Natural killer cell (primary cell): ENCODE measurements at regions of chr4 and their contacts with region 1.

Region 1: GRCh38 chr4:173334085-173334772 is at the start of gene HMGB2:
- DNase-seq: peak; percentile 99 to 100
- ATAC-seq: peak; percentile 90 to 98 (median 90)
- H3K4me3 ChIP-seq: peak within 1 kb of the TSS; percentile 60
- H3K4me3 Mint-ChIP-seq: peak within 1 kb of the TSS; percentile 99
- H3K27ac ChIP-seq: peak within 1 kb of the TSS; percentile 89
- H3K27ac Mint-ChIP-seq: peak within 1 kb of the TSS; percentile 98 to 99
- H3K4me1 ChIP-seq: peaks cover 11% of the 10 kb centered on the region
- H3K4me1 Mint-ChIP-seq: peaks cover 27 to 33% of the 10 kb centered on the region in 2 donors
- H3K27me3 ChIP-seq: no peaks in the 10 kb centered on the region
- H3K27me3 Mint-ChIP-seq: no peaks in the 10 kb centered on the region
- CTCF ChIP-seq: no peak
- total RNA-seq, gene HMGB2: 145 to 214 (median 151) TPM

Region 2: GRCh38 chr4:173357939-173358338 is 23.7 kb after region 1 on chr4:
- intact Hi-C with region 1: no loop called
- DNase-seq: no peak
- ATAC-seq: no peak
- H3K4me3 ChIP-seq: no peak overlapping the region
- H3K4me3 Mint-ChIP-seq: no peak overlapping the region
- H3K27ac ChIP-seq: no peak overlapping the region
- H3K27ac Mint-ChIP-seq: no peak overlapping the region
- H3K4me1 ChIP-seq: peaks cover 4% of the 10 kb centered on the region
- H3K4me1 Mint-ChIP-seq: peaks cover 5 to 6% of the 10 kb centered on the region in 2 donors
- H3K27me3 ChIP-seq: no peaks in the 10 kb centered on the region
- H3K27me3 Mint-ChIP-seq: peaks cover 0 to under 1% of the 10 kb centered on the region in 2 donors
- CTCF ChIP-seq: no peak

Region 3: DNA sequence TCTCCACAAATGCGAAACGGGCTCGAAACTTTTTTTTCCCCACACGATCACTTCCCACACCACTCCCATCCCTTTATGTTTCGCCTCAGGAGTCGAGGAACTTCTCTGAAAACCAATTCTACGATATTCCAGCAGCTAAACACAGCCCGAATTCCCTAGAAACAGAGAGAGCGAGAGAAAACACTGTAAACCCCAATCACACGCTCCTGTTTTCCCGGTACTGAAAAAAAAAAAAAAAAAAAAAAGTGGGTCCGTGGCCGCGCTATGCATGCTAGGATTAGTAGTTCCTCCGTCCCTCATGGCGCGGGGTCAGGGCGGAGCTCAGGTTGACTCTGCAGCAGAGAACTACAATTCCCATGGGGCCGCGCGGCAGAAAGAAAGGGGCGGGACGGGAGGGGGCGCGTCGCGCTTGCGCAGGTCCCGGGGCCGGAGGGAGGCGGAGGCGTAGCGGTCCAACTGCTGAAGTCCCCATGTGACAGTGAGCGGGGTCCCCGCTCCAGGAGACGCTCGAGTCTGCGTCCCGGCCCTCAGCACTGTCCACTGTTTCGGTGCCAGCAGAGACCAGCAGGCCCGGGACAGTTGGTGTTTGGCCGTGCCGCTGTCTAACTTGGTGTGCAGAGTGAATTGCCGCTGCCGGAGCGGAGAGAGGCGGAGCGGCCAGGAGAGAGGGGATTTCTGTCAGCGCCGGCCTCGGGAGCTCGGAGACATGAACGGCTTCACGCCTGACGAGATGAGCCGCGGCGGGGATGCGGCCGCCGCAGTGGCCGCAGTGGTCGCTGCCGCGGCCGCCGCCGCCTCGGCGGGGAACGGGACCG is 36.5 kb after region 1 on chr4 and contains the start of gene SAP30:
- intact Hi-C with region 1: loop called (anchors 1 kb)
- DNase-seq: peak; percentile 90 to 98
- ATAC-seq: peak; percentile 85 to 95 (median 88)
- H3K4me3 ChIP-seq: peak within 1 kb of the TSS; percentile 98
- H3K4me3 Mint-ChIP-seq: peak within 1 kb of the TSS; percentile 100
- H3K27ac ChIP-seq: peak within 1 kb of the TSS; percentile 92
- H3K27ac Mint-ChIP-seq: peak within 1 kb of the TSS; percentile 92 to 94
- H3K4me1 ChIP-seq: peaks cover 13% of the 10 kb centered on the region
- H3K4me1 Mint-ChIP-seq: peaks cover 21 to 26% of the 10 kb centered on the region in 2 donors
- H3K27me3 ChIP-seq: no peaks in the 10 kb centered on the region
- H3K27me3 Mint-ChIP-seq: no peaks in the 10 kb centered on the region
- CTCF ChIP-seq: no peak
- total RNA-seq, gene SAP30: 2.6 to 9.1 (median 3.1) TPM